ENCODE measurements at regions of chr6 and their contacts with region 1.

Region 1: GRCh38 chr6:2988426-2989331 is 11.0 kb upstream of the NQO2 start:
- DNase-seq: peak; percentile 59 to 90 (median 74)
- ATAC-seq: peak; percentile 63
- H3K4me3 ChIP-seq: peak overlapping the region; percentile 98
- H3K4me3 Mint-ChIP-seq: peak overlapping the region; percentile 97
- H3K27ac ChIP-seq: peak overlapping the region; percentile 92 to 96
- H3K27ac Mint-ChIP-seq: peak overlapping the region; percentile 100
- H3K4me1 ChIP-seq: peaks cover 32% of the 10 kb centered on the region
- H3K4me1 Mint-ChIP-seq: peaks cover 28% of the 10 kb centered on the region
- H3K27me3 ChIP-seq: no peaks in the 10 kb centered on the region
- H3K27me3 Mint-ChIP-seq: no peaks in the 10 kb centered on the region
- CTCF ChIP-seq: peak; percentile 72

Region 2: GRCh38 chr6:2841264-2842138 is 147.2 kb before region 1 on chr6 and contains the start of gene SERPINB1:
- CTCF ChIA-PET with region 1: interaction called, 12 read pairs
- POLR2A ChIA-PET with region 1: interaction called, 73 read pairs
- intact Hi-C with region 1: loop called (anchors 2 to 5 kb)
- DNase-seq: peak; percentile 53 to 90 (median 71)
- ATAC-seq: peak; percentile 76
- H3K4me3 ChIP-seq: peak within 1 kb of the TSS; percentile 72
- H3K4me3 Mint-ChIP-seq: peak within 1 kb of the TSS; percentile 87
- H3K27ac ChIP-seq: peak within 1 kb of the TSS; percentile 76
- H3K27ac Mint-ChIP-seq: peak within 1 kb of the TSS; percentile 86
- H3K4me1 ChIP-seq: peaks cover 43% of the 10 kb centered on the region
- H3K4me1 Mint-ChIP-seq: peaks cover 70% of the 10 kb centered on the region
- H3K27me3 ChIP-seq: no peaks in the 10 kb centered on the region
- H3K27me3 Mint-ChIP-seq: no peaks in the 10 kb centered on the region
- CTCF ChIP-seq: no peak
- total RNA-seq, gene SERPINB1: 58.3 to 58.4 TPM

Region 3: GRCh38 chr6:2876210-2877056 is 112.2 kb before region 1 on chr6:
- CTCF ChIA-PET with region 1: no interaction called
- POLR2A ChIA-PET with region 1: interaction called, 24 read pairs
- intact Hi-C with region 1: no loop called
- DNase-seq: peak in 4 of 14 experiments; percentile 23 to 68 (median 62)
- ATAC-seq: no peak
- H3K4me3 ChIP-seq: peak overlapping the region; percentile 44
- H3K4me3 Mint-ChIP-seq: peak overlapping the region; percentile 95
- H3K27ac ChIP-seq: peak overlapping the region; percentile 73 to 79
- H3K27ac Mint-ChIP-seq: peak overlapping the region; percentile 87
- H3K4me1 ChIP-seq: peaks cover 63% of the 10 kb centered on the region
- H3K4me1 Mint-ChIP-seq: peaks cover 80% of the 10 kb centered on the region
- H3K27me3 ChIP-seq: no peaks in the 10 kb centered on the region
- H3K27me3 Mint-ChIP-seq: no peaks in the 10 kb centered on the region
- CTCF ChIP-seq: no peak

Region 4: GRCh38 chr6:2952557-2953095 is 36.1 kb before region 1 on chr6:
- CTCF ChIA-PET with region 1: interaction called, 9 read pairs
- POLR2A ChIA-PET with region 1: interaction called, 31 read pairs
- intact Hi-C with region 1: loop called (anchors 1 to 5 kb)
- DNase-seq: peak; percentile 20 to 88 (median 47)
- ATAC-seq: peak; percentile 93
- H3K4me3 ChIP-seq: peak overlapping the region; percentile 26
- H3K4me3 Mint-ChIP-seq: peak overlapping the region; percentile 60
- H3K27ac ChIP-seq: no peak overlapping the region
- H3K27ac Mint-ChIP-seq: no peak overlapping the region
- H3K4me1 ChIP-seq: peaks cover 10% of the 10 kb centered on the region
- H3K4me1 Mint-ChIP-seq: no peaks in the 10 kb centered on the region
- H3K27me3 ChIP-seq: no peaks in the 10 kb centered on the region
- H3K27me3 Mint-ChIP-seq: no peaks in the 10 kb centered on the region
- CTCF ChIP-seq: peak; percentile 93

Region 5: GRCh38 chr6:3023663-3024483 is 35.2 kb after region 1 on chr6:
- CTCF ChIA-PET with region 1: interaction called, 4 read pairs
- POLR2A ChIA-PET with region 1: interaction called, 78 read pairs
- intact Hi-C with region 1: no loop called
- DNase-seq: peak; percentile 58 to 93 (median 88)
- ATAC-seq: peak; percentile 82
- H3K4me3 ChIP-seq: peak overlapping the region; percentile 78
- H3K4me3 Mint-ChIP-seq: peak overlapping the region; percentile 86
- H3K27ac ChIP-seq: peak overlapping the region; percentile 40 to 76
- H3K27ac Mint-ChIP-seq: peak overlapping the region; percentile 77
- H3K4me1 ChIP-seq: peaks cover 68% of the 10 kb centered on the region
- H3K4me1 Mint-ChIP-seq: peaks cover 53% of the 10 kb centered on the region
- H3K27me3 ChIP-seq: no peaks in the 10 kb centered on the region
- H3K27me3 Mint-ChIP-seq: no peaks in the 10 kb centered on the region
- CTCF ChIP-seq: no peak

Region 6: DNA sequence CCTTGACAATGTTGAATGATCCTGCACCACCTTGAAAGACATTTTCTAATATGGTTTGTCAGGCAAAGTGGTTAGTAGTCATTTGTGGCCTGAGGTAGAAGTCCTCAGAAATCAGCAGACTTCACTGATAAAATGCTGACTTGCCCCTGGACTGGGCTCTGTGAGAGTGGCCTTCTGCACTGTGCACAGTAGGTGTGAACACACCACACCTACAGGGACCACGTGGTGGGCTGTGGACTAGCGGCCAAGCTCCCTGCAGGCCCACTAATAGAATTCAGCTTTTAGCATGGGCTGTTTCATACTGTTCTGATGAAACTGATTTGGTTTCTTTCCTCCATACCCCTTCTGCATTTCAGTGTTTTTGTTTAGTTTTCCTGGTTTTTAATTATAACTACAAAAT is 137.1 kb after region 1 on chr6:
- CTCF ChIA-PET with region 1: no interaction called
- POLR2A ChIA-PET with region 1: no interaction called
- intact Hi-C with region 1: loop called in 1 of 2 experiments (anchors 5 kb)
- DNase-seq: no peak
- ATAC-seq: no peak
- H3K4me3 ChIP-seq: no peak overlapping the region
- H3K4me3 Mint-ChIP-seq: no peak overlapping the region
- H3K27ac ChIP-seq: no peak overlapping the region
- H3K27ac Mint-ChIP-seq: no peak overlapping the region
- H3K4me1 ChIP-seq: no peaks in the 10 kb centered on the region
- H3K4me1 Mint-ChIP-seq: peaks cover 4% of the 10 kb centered on the region
- H3K27me3 ChIP-seq: no peaks in the 10 kb centered on the region
- H3K27me3 Mint-ChIP-seq: no peaks in the 10 kb centered on the region
- CTCF ChIP-seq: no peak

Region 7: GRCh38 chr6:3176562-3177355 is 188.1 kb after region 1 on chr6:
- CTCF ChIA-PET with region 1: no interaction called
- POLR2A ChIA-PET with region 1: no interaction called
- intact Hi-C with region 1: no loop called
- DNase-seq: peak in 6 of 14 experiments; percentile 11 to 62 (median 34)
- ATAC-seq: peak; percentile 41
- H3K4me3 ChIP-seq: no peak overlapping the region
- H3K4me3 Mint-ChIP-seq: no peak overlapping the region
- H3K27ac ChIP-seq: no peak overlapping the region
- H3K27ac Mint-ChIP-seq: no peak overlapping the region
- H3K4me1 ChIP-seq: no peaks in the 10 kb centered on the region
- H3K4me1 Mint-ChIP-seq: no peaks in the 10 kb centered on the region
- H3K27me3 ChIP-seq: peaks cover 0 to 4% of the 10 kb centered on the region in 2 experiments
- H3K27me3 Mint-ChIP-seq: no peaks in the 10 kb centered on the region
- CTCF ChIP-seq: no peak

Region 8: DNA sequence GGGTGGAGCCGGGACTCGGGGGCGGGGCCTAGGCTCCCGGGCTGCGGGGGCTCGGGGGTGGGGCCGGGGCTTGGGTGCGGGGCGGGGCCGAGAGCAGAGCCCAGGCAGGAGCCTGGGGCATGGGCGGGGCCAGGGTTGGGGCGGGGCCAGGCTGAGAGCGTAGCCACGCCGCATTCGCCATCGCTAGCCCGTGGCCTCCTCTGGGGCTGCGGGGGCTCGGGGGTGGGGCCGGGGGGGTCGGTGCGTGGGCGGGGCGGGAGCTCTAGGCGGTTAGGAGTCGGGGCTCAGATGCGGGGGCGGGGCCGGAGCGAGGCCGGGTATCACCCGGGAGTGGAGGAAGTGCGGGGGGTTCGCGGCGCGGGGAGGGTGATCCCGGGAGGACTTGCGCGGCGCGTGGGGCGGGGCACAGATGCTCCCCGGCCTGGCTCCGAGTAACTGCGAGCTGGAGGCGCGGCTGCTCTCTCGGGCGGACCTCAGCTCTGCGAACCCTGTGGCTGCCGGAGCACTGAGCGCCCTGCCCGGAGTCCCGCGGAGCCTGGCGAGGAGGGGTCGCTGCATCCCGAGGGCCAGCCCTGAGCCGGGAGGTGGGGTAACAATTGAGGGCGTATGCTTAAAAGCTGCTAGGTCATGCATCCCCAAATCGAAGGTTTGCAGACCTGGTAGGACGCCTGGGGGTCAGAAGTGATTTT is 1147.1 kb after region 1 on chr6:
- CTCF ChIA-PET with region 1: no interaction called
- POLR2A ChIA-PET with region 1: no interaction called
- intact Hi-C with region 1: loop called in 1 of 2 experiments (anchors 5 kb)
- DNase-seq: peak; percentile 90 to 99 (median 94)
- ATAC-seq: peak; percentile 87
- H3K4me3 ChIP-seq: peak overlapping the region; percentile 82
- H3K4me3 Mint-ChIP-seq: peak overlapping the region; percentile 86
- H3K27ac ChIP-seq: peak overlapping the region; percentile 47 to 62
- H3K27ac Mint-ChIP-seq: peak overlapping the region; percentile 97
- H3K4me1 ChIP-seq: peaks cover 22% of the 10 kb centered on the region
- H3K4me1 Mint-ChIP-seq: peaks cover 50% of the 10 kb centered on the region
- H3K27me3 ChIP-seq: no peaks in the 10 kb centered on the region
- H3K27me3 Mint-ChIP-seq: no peaks in the 10 kb centered on the region
- CTCF ChIP-seq: no peak

Measured in CD4-positive, alpha-beta T cell (primary cell).